PC-3 (cell line): ENCODE measurements at regions of chr4 and their contacts with region 1.

Region 1: DNA sequence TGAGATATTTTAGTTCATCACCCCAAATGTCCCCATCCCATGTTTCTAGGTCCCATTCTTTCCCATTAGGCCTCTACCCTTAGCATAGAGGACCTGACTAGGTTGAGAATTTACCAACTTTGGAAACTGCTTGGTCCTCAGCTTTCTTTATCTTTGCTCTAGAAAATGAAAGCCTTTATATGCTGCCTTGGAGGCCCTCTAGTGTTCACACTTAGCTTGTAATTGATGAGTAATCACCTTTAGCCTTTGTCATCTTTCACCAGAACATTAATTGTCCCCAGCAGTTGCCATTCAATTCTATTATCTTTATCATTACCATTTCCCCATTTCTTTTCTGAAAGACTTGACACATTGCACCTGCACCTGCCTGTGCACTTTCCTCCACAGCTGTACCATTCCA is 589.2 kb upstream of the NR3C2 start:
- DNase-seq: peak; percentile 32
- ATAC-seq: peak; percentile 35
- H3K4me3 ChIP-seq: no peak overlapping the region
- H3K27ac ChIP-seq: no peak overlapping the region
- H3K4me1 ChIP-seq: no peaks in the 10 kb centered on the region
- H3K27me3 ChIP-seq: no peaks in the 10 kb centered on the region
- CTCF ChIP-seq: peak; percentile 60

Region 2: GRCh38 chr4:148787831-148788477 is 243.4 kb before region 1 on chr4:
- CTCF ChIA-PET with region 1: no interaction called
- POLR2A ChIA-PET with region 1: no interaction called
- intact Hi-C with region 1: loop called (anchors 10 kb)
- DNase-seq: peak; percentile 48
- ATAC-seq: peak; percentile 13
- H3K4me3 ChIP-seq: no peak overlapping the region
- H3K27ac ChIP-seq: peak overlapping the region; percentile 35
- H3K4me1 ChIP-seq: peaks cover 37% of the 10 kb centered on the region
- H3K27me3 ChIP-seq: no peaks in the 10 kb centered on the region
- CTCF ChIP-seq: no peak

Region 3: GRCh38 chr4:149084144-149084543 is 52.7 kb after region 1 on chr4:
- CTCF ChIA-PET with region 1: no interaction called
- POLR2A ChIA-PET with region 1: no interaction called
- intact Hi-C with region 1: no loop called
- DNase-seq: no peak
- ATAC-seq: no peak
- H3K4me3 ChIP-seq: no peak overlapping the region
- H3K27ac ChIP-seq: no peak overlapping the region
- H3K4me1 ChIP-seq: no peaks in the 10 kb centered on the region
- H3K27me3 ChIP-seq: no peaks in the 10 kb centered on the region
- CTCF ChIP-seq: no peak